ENCODE measurements at regions of chr6 and their contacts with region 1.

Region 1: GRCh38 chr6:24910961-24911712 is 24.6 kb downstream of the RIPOR2 start:
- DNase-seq: no peak
- ATAC-seq: peak; percentile 38
- H3K4me3 ChIP-seq: peak overlapping the region; percentile 45 to 66 (median 58)
- H3K4me3 Mint-ChIP-seq: peak overlapping the region; percentile 90
- H3K27ac ChIP-seq: peak overlapping the region; percentile 83 to 93
- H3K27ac Mint-ChIP-seq: peak overlapping the region; percentile 89
- H3K4me1 ChIP-seq: peaks cover 97 to 98% of the 10 kb centered on the region in 2 donors
- H3K4me1 Mint-ChIP-seq: peaks cover 94% of the 10 kb centered on the region
- H3K27me3 ChIP-seq: no peaks in the 10 kb centered on the region
- H3K27me3 Mint-ChIP-seq: no peaks in the 10 kb centered on the region
- CTCF ChIP-seq: no peak

Region 2: DNA sequence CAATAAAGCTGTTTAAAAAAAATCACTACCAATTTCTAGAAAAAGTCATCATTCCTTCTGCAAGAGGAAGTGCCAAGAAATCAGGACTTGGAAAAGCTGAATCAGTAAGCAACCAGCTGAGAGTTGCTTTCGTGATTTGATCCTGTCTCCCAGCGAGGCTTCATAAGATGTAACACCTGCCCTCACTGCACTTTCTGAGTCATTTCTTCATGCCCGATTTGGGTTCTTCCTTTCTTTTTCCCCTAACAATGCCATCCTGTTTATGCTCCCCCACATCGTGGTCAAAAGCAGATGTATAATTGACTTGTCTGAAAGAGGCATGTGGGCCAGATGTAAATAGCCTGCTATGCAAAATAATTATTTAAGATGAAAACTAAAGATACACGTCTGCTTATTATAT is 27.5 kb before region 1 on chr6:
- CTCF ChIA-PET with region 1: interaction called, 12 read pairs
- POLR2A ChIA-PET with region 1: interaction called, 7 read pairs
- intact Hi-C with region 1: loop called (anchors 2 kb)
- DNase-seq: peak; percentile 27
- ATAC-seq: no peak
- H3K4me3 ChIP-seq: no peak overlapping the region
- H3K4me3 Mint-ChIP-seq: peak overlapping the region; percentile 76
- H3K27ac ChIP-seq: peak overlapping the region; percentile 26 to 84
- H3K27ac Mint-ChIP-seq: peak overlapping the region; percentile 87
- H3K4me1 ChIP-seq: peaks cover 69 to 74% of the 10 kb centered on the region in 2 donors
- H3K4me1 Mint-ChIP-seq: peaks cover 87% of the 10 kb centered on the region
- H3K27me3 ChIP-seq: no peaks in the 10 kb centered on the region
- H3K27me3 Mint-ChIP-seq: no peaks in the 10 kb centered on the region
- CTCF ChIP-seq: no peak

Region 3: DNA sequence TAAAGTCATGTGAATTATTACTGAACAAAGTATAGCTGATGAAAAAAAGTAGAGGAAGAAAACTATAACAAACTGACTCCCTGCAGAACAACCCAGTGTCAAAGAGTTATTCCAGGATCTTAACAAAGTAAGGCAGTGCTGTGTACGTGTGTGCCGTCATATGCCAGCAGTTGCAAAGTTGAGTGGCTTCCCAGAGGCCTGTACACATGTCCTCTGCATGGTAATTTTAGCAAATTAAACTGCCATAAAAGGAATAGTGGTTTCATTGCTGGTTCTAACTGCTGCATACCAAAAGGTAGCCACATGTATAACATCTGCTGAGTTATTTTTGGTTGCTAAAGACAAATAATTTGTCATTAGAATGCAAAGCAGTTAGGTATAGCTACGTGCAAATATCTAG is 20.1 kb before region 1 on chr6:
- CTCF ChIA-PET with region 1: interaction called, 12 read pairs
- POLR2A ChIA-PET with region 1: no interaction called
- intact Hi-C with region 1: no loop called
- DNase-seq: no peak
- ATAC-seq: peak; percentile 28
- H3K4me3 ChIP-seq: no peak overlapping the region
- H3K4me3 Mint-ChIP-seq: peak overlapping the region; percentile 58
- H3K27ac ChIP-seq: peak overlapping the region in 1 of 2 donors; percentile 53
- H3K27ac Mint-ChIP-seq: peak overlapping the region; percentile 54
- H3K4me1 ChIP-seq: peaks cover 82 to 83% of the 10 kb centered on the region in 2 donors
- H3K4me1 Mint-ChIP-seq: peaks cover 88% of the 10 kb centered on the region
- H3K27me3 ChIP-seq: no peaks in the 10 kb centered on the region
- H3K27me3 Mint-ChIP-seq: no peaks in the 10 kb centered on the region
- CTCF ChIP-seq: no peak

Region 4: DNA sequence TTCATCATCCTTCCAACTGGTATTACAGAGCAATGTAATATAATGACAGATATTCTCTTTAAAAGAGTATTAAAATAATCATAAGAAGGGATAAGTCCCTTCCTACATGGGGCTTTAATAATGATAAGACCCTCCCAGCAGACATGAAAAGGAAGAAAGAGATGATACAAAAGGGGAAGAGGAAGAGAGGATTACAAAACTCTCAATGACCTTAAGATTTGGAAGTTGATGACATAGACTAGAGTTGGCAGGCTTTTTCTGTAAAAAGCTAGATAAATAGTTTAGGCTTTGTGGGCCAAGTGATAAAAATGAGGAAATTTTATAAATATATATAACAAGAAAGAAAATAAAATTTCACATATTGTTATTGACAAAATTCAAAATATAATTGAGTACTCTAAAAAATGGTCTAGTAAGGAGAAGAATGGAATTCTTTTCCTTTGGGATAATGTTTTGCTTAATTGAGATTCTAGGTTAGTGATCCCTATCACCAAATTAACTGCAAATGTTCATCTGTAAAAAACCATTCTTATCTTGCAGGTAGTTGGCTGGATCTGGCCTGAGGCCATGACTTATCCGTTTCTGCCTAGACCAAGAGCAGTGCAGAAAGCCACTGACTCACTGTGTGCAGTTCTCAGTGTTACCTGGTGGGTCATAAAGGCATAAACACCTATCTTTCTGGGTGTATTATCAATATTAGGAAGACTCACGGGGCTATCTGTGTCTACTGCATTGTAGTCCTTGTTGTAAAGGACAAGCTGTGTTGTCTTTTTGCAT is 13.6 kb after region 1 on chr6:
- CTCF ChIA-PET with region 1: interaction called, 44 read pairs
- POLR2A ChIA-PET with region 1: interaction called, 34 read pairs
- intact Hi-C with region 1: no loop called
- DNase-seq: no peak
- ATAC-seq: no peak
- H3K4me3 ChIP-seq: peak overlapping the region in 2 of 5 experiments; percentile 22 to 27
- H3K4me3 Mint-ChIP-seq: peak overlapping the region; percentile 73
- H3K27ac ChIP-seq: peak overlapping the region in 1 of 2 donors; percentile 93
- H3K27ac Mint-ChIP-seq: peak overlapping the region; percentile 86
- H3K4me1 ChIP-seq: peaks cover 90 to 94% of the 10 kb centered on the region in 2 donors
- H3K4me1 Mint-ChIP-seq: peaks cover 87% of the 10 kb centered on the region
- H3K27me3 ChIP-seq: no peaks in the 10 kb centered on the region
- H3K27me3 Mint-ChIP-seq: no peaks in the 10 kb centered on the region
- CTCF ChIP-seq: no peak

Region 5: DNA sequence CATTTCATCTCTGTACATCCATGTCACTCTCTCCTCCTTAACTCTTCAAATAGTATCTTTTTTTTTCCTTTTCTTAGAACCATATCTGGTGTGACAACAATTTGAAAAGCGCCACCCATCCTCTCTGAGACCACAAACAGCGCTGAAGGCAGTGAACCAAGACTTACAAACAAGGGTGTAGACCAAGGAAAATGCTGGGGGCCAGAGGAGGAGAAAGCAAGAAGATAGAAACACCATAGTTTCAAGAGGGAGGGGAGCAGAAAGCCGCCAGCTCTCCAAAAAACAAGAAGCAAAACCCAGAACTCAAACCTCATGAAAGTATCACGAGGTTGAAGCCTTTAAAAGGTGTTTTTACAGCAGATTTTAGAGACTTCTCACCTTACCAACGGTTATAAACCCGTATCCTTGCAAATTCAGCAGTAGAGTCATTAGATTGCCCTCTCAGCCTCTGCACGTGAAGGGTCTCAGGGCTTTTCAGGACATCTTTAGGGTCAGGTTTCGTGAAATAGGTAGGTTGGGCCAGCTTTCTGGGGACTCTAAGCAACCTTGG is 38.0 kb after region 1 on chr6:
- CTCF ChIA-PET with region 1: interaction called, 31 read pairs
- POLR2A ChIA-PET with region 1: interaction called, 3 read pairs
- intact Hi-C with region 1: no loop called
- DNase-seq: peak; percentile 91
- ATAC-seq: peak; percentile 90
- H3K4me3 ChIP-seq: peak overlapping the region in 3 of 5 experiments; percentile 15 to 58 (median 31)
- H3K4me3 Mint-ChIP-seq: peak overlapping the region; percentile 79
- H3K27ac ChIP-seq: peak overlapping the region; percentile 92 to 93
- H3K27ac Mint-ChIP-seq: peak overlapping the region; percentile 98
- H3K4me1 ChIP-seq: peaks cover 79 to 84% of the 10 kb centered on the region in 2 donors
- H3K4me1 Mint-ChIP-seq: peaks cover 73% of the 10 kb centered on the region
- H3K27me3 ChIP-seq: no peaks in the 10 kb centered on the region
- H3K27me3 Mint-ChIP-seq: no peaks in the 10 kb centered on the region
- CTCF ChIP-seq: no peak